Activated B cell treated with CpG ODN at 0.5 μM for 24 hours (primary cell): ENCODE measurements at regions of chr2 and their contacts with region 1.

Region 1: DNA sequence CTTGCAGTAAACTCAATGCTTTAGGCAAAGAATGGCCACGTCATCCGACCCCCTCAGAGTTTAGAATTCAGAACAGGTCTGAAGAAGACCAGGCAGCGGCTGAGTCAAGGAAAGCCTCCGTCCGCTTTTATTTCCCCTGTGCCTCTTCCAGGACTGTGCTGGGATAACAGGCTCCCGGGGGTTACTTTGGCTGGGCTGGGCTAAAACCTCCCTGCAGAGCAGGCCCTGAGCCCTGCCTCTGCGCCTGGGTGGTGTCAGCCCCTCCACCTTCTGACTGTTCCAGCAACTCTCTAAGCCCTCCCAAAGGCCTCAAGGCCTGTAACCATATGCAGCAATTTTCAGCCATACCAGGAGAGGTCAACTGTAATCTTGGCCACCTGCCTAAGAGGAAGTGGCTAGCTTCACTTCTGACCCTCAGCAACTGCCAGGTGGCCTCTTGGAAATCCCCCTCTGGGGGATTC is 166.5 kb downstream of the RPIA start:
- DNase-seq: peak; percentile 39
- ATAC-seq: peak; percentile 43
- H3K4me3 Mint-ChIP-seq: peak overlapping the region; percentile 97
- H3K27ac Mint-ChIP-seq: peak overlapping the region; percentile 98
- H3K4me1 Mint-ChIP-seq: peaks cover 54% of the 10 kb centered on the region
- H3K27me3 Mint-ChIP-seq: no peaks in the 10 kb centered on the region
- CTCF ChIP-seq: no peak

Region 2: GRCh38 chr2:88838165-88838635 is 19.8 kb before region 1 on chr2:
- CTCF ChIA-PET with region 1: interaction called, 187 read pairs
- POLR2A ChIA-PET with region 1: interaction called, 1,820 read pairs
- intact Hi-C with region 1: loop called (anchors 1 kb)
- DNase-seq: peak; percentile 47
- ATAC-seq: peak; percentile 83
- H3K4me3 Mint-ChIP-seq: peak overlapping the region; percentile 60
- H3K27ac Mint-ChIP-seq: peak overlapping the region; percentile 97
- H3K4me1 Mint-ChIP-seq: peaks cover 90% of the 10 kb centered on the region
- H3K27me3 Mint-ChIP-seq: no peaks in the 10 kb centered on the region
- CTCF ChIP-seq: no peak

Region 3: GRCh38 chr2:88845772-88846661 is 12.0 kb before region 1 on chr2:
- CTCF ChIA-PET with region 1: interaction called, 9 read pairs
- POLR2A ChIA-PET with region 1: interaction called, 1,820 read pairs
- intact Hi-C with region 1: loop called (anchors 1 kb)
- DNase-seq: peak; percentile 50
- ATAC-seq: peak; percentile 88
- H3K4me3 Mint-ChIP-seq: peak overlapping the region; percentile 55
- H3K27ac Mint-ChIP-seq: peak overlapping the region; percentile 97
- H3K4me1 Mint-ChIP-seq: peaks cover 98% of the 10 kb centered on the region
- H3K27me3 Mint-ChIP-seq: no peaks in the 10 kb centered on the region
- CTCF ChIP-seq: no peak

Region 4: DNA sequence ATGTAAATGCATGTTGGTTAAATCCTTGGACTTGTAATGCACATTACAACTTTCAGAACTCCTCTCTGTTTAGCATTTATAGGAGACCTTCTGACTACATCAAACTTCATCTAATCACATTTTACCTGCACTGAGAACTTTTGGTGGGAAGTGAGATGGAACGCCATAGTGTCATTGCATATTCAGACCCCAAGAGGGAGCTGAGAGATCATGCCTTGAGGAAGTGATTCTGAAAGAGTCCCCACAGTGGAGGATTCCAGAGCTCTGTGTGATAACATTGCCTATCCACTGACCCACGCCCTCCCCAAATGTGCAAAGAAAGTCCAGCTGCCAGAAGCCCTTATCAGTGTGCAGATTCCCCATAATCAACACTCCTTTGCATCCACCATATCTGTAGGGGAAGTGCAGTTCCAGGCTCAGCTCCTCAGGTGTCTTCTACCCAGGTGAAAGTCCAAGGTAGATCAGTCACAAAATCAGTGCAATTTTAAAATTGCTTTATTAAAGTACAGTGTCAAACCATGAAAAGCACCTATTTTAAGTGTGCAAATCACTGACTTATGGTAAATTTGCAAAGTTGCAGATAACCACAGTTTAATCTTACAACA is 45.9 kb after region 1 on chr2:
- CTCF ChIA-PET with region 1: interaction called, 3 read pairs
- POLR2A ChIA-PET with region 1: no interaction called
- intact Hi-C with region 1: loop called (anchors 2 kb)
- DNase-seq: no peak
- ATAC-seq: peak; percentile 81
- H3K4me3 Mint-ChIP-seq: no peak overlapping the region
- H3K27ac Mint-ChIP-seq: no peak overlapping the region
- H3K4me1 Mint-ChIP-seq: peaks cover 4% of the 10 kb centered on the region
- H3K27me3 Mint-ChIP-seq: no peaks in the 10 kb centered on the region
- CTCF ChIP-seq: no peak

Region 5: GRCh38 chr2:88950010-88950409 is 92.0 kb after region 1 on chr2:
- CTCF ChIA-PET with region 1: no interaction called
- POLR2A ChIA-PET with region 1: interaction called, 16 read pairs
- intact Hi-C with region 1: loop called (anchors 1 kb)
- DNase-seq: no peak
- ATAC-seq: no peak
- H3K4me3 Mint-ChIP-seq: no peak overlapping the region
- H3K27ac Mint-ChIP-seq: no peak overlapping the region
- H3K4me1 Mint-ChIP-seq: peaks cover 6% of the 10 kb centered on the region
- H3K27me3 Mint-ChIP-seq: peaks cover 2% of the 10 kb centered on the region
- CTCF ChIP-seq: no peak